ENCODE measurements at regions of chr6 and their contacts with region 1.

Region 1: DNA sequence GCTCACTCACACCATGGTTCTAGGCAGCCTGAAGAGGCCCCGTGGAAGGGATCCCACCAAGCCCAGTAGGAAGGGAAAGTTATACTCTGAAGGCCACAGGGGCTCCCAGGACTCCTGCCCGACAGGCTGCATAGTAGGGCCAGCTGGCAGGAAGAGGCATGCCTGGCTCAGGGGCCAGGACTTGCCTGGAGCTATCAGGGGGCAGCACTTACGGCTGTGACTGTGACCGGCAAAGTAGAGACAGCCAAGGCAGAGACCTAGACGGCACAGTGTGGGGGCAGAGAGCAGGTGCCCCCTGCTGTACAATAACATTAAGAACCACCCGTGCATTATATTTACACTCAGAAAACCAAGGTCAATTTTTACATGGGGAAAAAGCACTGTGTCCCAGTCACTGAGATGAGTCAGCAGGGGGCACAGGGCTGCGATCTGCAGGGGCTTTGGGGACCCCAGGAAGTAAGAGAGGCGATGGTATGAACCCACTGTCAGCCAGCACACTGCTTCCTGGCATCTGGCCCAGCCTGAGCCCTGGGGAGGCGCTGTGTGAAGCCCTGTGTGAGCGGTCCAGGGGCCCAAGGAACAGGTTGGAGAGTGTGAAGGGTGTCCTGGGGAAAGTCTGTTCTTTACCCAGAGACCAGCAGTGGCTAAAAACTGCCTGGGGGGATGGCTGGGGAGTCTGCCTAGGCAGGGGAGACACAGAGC is 9.9 kb downstream of the CCDC167 start:
- DNase-seq: no peak
- H3K4me3 ChIP-seq: no peak overlapping the region
- H3K4me3 Mint-ChIP-seq: no peak overlapping the region
- H3K27ac ChIP-seq: no peak overlapping the region
- H3K27ac Mint-ChIP-seq: peak overlapping the region in 3 of 7 donors; percentile 12 to 38 (median 15)
- H3K4me1 ChIP-seq: no peaks in the 10 kb centered on the region
- H3K4me1 Mint-ChIP-seq: no peaks in the 10 kb centered on the region
- H3K27me3 ChIP-seq: no peaks in the 10 kb centered on the region
- H3K27me3 Mint-ChIP-seq: peaks cover 2 to 4% (median 3%) of the 10 kb centered on the region in 3 donors
- CTCF ChIP-seq: no peak

Region 2: GRCh38 chr6:37758234-37759002 is 268.6 kb after region 1 on chr6:
- intact Hi-C with region 1: no loop called
- DNase-seq: no peak
- H3K4me3 ChIP-seq: no peak overlapping the region
- H3K4me3 Mint-ChIP-seq: no peak overlapping the region
- H3K27ac ChIP-seq: no peak overlapping the region
- H3K27ac Mint-ChIP-seq: peak overlapping the region in 1 of 7 donors; percentile 51
- H3K4me1 ChIP-seq: no peaks in the 10 kb centered on the region
- H3K4me1 Mint-ChIP-seq: no peaks in the 10 kb centered on the region
- H3K27me3 ChIP-seq: no peaks in the 10 kb centered on the region
- H3K27me3 Mint-ChIP-seq: peaks cover 2 to 7% (median 6%) of the 10 kb centered on the region in 3 donors
- CTCF ChIP-seq: no peak

Region 3: DNA sequence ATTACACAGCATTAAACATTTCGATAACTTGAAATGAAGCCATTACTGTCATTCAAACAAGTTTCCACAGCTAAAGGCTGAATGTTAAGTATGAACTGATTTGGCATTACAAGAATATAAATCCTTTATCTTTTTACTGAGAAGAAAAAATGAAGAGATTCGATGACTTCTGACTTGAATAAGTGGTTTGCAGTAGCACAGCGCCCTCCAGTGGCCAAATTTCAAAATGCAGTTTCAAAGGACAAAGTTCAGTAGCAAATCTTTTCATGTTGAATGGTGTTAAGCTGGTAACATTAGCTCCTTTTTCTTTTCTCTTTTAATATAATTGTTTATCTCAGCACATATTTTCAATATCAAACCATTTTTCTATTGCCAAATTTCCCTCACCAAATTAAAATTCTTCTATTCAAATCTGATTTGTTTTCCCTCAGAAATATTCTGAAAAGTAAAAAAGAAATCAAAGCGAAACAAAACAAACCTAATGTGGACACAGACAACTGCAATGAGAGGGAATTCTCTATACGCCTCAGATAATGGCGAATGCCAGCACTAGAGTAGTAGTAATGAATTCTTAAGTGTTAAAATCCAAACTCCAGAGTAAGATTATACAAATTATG is 1004.2 kb after region 1 on chr6:
- intact Hi-C with region 1: loop called in 1 of 2 experiments (anchors 5 kb)
- DNase-seq: peak; percentile 43 to 61 (median 60)
- H3K4me3 ChIP-seq: no peak overlapping the region
- H3K4me3 Mint-ChIP-seq: no peak overlapping the region
- H3K27ac ChIP-seq: no peak overlapping the region
- H3K27ac Mint-ChIP-seq: no peak overlapping the region
- H3K4me1 ChIP-seq: no peaks in the 10 kb centered on the region
- H3K4me1 Mint-ChIP-seq: no peaks in the 10 kb centered on the region
- H3K27me3 ChIP-seq: no peaks in the 10 kb centered on the region
- H3K27me3 Mint-ChIP-seq: no peaks in the 10 kb centered on the region
- CTCF ChIP-seq: peak; percentile 98

Measured in CD14-positive monocyte (primary cell).